ENCODE measurements at regions of chr18 and their contacts with region 1.

Region 1: GRCh38 chr18:48445540-48445939 is 36.4 kb upstream of the ZBTB7C start:
- DNase-seq: peak; percentile 90
- ATAC-seq: peak; percentile 75
- H3K4me3 Mint-ChIP-seq: no peak overlapping the region
- H3K27ac Mint-ChIP-seq: no peak overlapping the region
- H3K4me1 Mint-ChIP-seq: no peaks in the 10 kb centered on the region
- H3K27me3 Mint-ChIP-seq: no peaks in the 10 kb centered on the region
- CTCF ChIP-seq: peak; percentile 83

Region 2: GRCh38 chr18:48037481-48038271 is 407.9 kb before region 1 on chr18:
- CTCF ChIA-PET with region 1: interaction called, 14 read pairs
- POLR2A ChIA-PET with region 1: no interaction called
- DNase-seq: peak; percentile 58
- ATAC-seq: peak; percentile 86
- H3K4me3 Mint-ChIP-seq: no peak overlapping the region
- H3K27ac Mint-ChIP-seq: no peak overlapping the region
- H3K4me1 Mint-ChIP-seq: no peaks in the 10 kb centered on the region
- H3K27me3 Mint-ChIP-seq: no peaks in the 10 kb centered on the region
- CTCF ChIP-seq: no peak

Region 3: DNA sequence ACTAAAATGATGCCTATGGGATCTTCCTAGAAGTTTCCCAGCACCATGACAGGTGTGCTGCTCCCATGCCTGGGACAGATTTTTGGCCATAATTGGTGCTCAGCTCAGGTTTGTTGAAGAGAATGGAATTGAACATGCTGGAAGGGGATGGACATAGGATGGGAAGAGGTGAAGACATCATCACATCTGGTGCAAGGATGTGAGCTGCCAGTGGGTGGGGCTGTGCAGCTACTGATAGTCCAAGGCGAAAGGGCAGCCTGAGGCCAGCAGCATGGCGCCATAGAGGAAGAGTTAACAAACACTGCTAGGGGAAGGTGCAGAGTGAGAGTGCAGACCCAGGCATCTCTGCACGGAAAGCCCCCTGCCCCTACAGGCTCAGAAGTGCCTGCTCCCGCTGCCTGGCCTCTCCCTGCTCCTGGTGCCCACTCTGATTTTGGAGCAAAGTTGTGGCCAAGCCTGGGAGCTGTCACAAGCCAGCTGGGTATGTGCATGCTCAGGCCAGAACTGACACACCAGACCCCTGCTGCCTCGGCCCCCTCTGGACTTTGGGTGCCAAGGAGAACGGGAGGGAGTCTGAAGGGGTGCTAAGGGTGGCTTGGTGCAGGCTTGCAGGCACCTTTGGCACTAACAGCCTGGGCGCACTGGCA is 214.9 kb before region 1 on chr18:
- CTCF ChIA-PET with region 1: interaction called, 74 read pairs
- POLR2A ChIA-PET with region 1: no interaction called
- DNase-seq: peak; percentile 84
- ATAC-seq: peak; percentile 96
- H3K4me3 Mint-ChIP-seq: no peak overlapping the region
- H3K27ac Mint-ChIP-seq: no peak overlapping the region
- H3K4me1 Mint-ChIP-seq: peaks cover 6% of the 10 kb centered on the region
- H3K27me3 Mint-ChIP-seq: no peaks in the 10 kb centered on the region
- CTCF ChIP-seq: peak; percentile 65

Region 4: GRCh38 chr18:48319801-48320638 is 125.5 kb before region 1 on chr18:
- CTCF ChIA-PET with region 1: interaction called, 14 read pairs
- POLR2A ChIA-PET with region 1: no interaction called
- DNase-seq: no peak
- ATAC-seq: no peak
- H3K4me3 Mint-ChIP-seq: no peak overlapping the region
- H3K27ac Mint-ChIP-seq: no peak overlapping the region
- H3K4me1 Mint-ChIP-seq: peaks cover 13% of the 10 kb centered on the region
- H3K27me3 Mint-ChIP-seq: peaks cover 2% of the 10 kb centered on the region
- CTCF ChIP-seq: no peak

Region 5: GRCh38 chr18:48419277-48420022 is 26.1 kb before region 1 on chr18:
- CTCF ChIA-PET with region 1: interaction called, 12 read pairs
- POLR2A ChIA-PET with region 1: no interaction called
- DNase-seq: peak; percentile 50
- ATAC-seq: peak; percentile 69
- H3K4me3 Mint-ChIP-seq: no peak overlapping the region
- H3K27ac Mint-ChIP-seq: no peak overlapping the region
- H3K4me1 Mint-ChIP-seq: peaks cover 27% of the 10 kb centered on the region
- H3K27me3 Mint-ChIP-seq: peaks cover 61% of the 10 kb centered on the region
- CTCF ChIP-seq: no peak

Region 6: DNA sequence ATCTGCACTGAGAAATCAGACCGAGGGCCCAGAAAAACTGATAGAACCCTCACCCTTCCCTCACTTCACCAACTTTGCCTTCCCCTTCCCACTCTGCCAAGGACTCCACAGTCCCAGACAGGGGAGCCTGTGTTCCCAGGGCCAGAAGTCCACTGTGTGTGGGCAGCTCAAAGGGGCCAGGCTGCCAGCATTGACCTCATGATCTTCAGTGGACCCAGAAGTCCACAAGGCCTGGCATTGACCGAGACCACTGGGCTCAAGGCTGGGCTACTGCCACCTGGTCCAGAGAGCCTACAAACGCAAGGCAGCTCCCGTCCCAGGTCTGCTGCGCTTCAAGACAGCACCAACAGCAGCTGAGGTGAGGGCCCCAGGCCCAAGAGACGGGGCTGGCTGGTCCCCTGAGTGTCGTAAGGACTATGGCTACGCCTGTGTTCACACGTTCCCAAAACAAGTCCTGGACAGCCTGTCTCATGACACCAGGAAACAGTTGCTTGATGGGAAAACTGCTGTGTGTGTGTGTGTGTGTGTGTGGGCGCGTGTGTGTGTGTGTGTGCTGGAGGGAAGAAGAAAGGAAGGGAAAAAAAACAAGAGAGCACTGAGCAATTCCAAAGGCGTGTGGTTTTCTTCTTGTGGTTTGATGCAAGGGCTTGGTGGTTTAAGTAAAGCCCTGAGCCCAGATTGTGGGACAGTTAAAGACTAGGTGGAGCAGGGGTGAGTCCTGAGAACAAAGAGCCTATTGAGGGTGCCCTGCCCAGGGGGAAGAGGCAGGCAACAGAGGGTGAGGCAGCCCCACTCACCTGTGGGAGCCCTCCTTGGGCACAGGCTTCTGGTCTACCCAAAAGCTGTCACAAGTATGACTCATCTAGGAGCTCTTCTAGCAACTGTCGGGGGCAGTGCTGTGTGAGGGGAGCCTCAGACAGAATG is 10.3 kb after region 1 on chr18:
- CTCF ChIA-PET with region 1: interaction called, 39 read pairs
- POLR2A ChIA-PET with region 1: no interaction called
- DNase-seq: no peak
- ATAC-seq: no peak
- H3K4me3 Mint-ChIP-seq: no peak overlapping the region
- H3K27ac Mint-ChIP-seq: no peak overlapping the region
- H3K4me1 Mint-ChIP-seq: peaks cover 7% of the 10 kb centered on the region
- H3K27me3 Mint-ChIP-seq: peaks cover 2% of the 10 kb centered on the region; the same call in 1 of the 2 replicates
- CTCF ChIP-seq: no peak